MCF 10A (cell line): ENCODE measurements at regions of chr6 and their contacts with region 1.

Region 1: DNA sequence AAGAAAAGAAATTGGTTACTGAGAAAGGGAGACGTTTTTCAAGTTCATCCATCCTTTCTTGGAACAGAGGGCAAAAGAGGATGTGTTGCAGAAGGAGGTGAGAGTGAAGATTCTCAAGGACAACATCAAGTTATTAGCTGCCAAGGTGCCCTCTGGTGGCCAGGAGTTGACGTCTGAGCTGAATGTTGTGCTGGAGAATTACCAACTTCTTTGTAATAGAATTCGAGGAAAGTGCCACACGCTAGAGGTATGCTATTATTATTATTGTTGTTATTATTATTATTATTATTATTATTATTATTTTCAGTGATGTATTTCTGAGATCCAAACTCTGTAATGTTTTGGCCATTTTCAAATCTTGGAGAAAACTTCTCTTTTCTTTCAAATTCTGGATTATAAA is 197.0 kb downstream of the UTRN start:
- DNase-seq: peak; percentile 84
- H3K4me3 Mint-ChIP-seq: no peak overlapping the region
- H3K27ac Mint-ChIP-seq: no peak overlapping the region
- H3K4me1 Mint-ChIP-seq: no peaks in the 10 kb centered on the region
- H3K27me3 Mint-ChIP-seq: no peaks in the 10 kb centered on the region
- CTCF ChIP-seq: peak; percentile 65

Region 2: DNA sequence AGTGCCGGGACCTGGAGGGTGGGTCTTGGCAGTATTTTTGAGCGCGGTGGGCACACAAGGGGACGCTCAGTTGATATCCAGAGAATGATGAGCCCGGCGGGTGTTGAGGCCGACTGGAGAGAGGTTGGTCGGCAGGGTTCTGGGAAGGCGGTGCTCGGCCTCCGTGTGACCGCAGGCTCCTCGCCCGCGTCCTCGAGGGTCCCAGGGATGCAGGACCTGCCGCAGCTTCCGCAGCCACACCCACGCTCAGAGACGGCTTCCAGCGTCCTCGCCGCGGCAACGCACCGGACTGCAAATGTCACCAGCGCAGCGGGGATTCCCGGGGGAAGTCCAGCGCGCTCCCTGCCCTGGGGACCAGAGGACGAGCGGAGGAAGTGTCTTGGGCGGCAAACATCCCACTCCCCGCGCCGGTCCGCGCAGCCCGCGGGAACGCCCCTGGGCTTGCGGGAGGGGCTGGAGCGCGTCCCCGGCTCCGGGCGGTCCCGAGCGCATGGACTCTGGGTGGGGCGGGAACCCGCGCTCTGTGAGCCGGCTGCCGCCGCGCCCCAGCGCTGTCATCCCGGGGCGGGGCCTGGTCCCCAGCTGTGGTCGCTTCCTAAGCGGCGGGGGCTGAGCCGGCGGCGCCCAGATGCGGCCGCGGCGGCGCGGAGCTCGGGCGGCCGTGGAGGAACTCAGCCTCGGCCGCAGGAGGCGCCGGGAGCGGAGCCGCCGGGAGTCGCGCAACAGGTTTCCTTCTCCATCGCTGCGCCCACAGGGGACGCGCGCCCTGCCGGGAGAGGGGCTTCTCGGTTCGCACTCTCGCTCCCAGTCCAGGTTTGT is 332.0 kb before region 1 on chr6 and contains the start of gene STX11:
- CTCF ChIA-PET with region 1: no interaction called
- POLR2A ChIA-PET with region 1: interaction called, 3 read pairs
- intact Hi-C with region 1: loop called (anchors 2 kb)
- DNase-seq: peak; percentile 48
- H3K4me3 Mint-ChIP-seq: peak within 1 kb of the TSS; percentile 67
- H3K27ac Mint-ChIP-seq: peak within 1 kb of the TSS; percentile 22
- H3K4me1 Mint-ChIP-seq: no peaks in the 10 kb centered on the region
- H3K27me3 Mint-ChIP-seq: no peaks in the 10 kb centered on the region
- CTCF ChIP-seq: no peak
- total RNA-seq, gene STX11: 1.1 and 2.1 TPM in 2 replicates